ENCODE measurements at regions of chr7 and their contacts with region 1.

Region 1: GRCh38 chr7:8155836-8156235 is 106.1 kb downstream of the ICA1 start:
- DNase-seq: no peak
- ATAC-seq: no peak
- H3K4me3 ChIP-seq: no peak overlapping the region
- H3K27ac ChIP-seq: no peak overlapping the region
- H3K4me1 ChIP-seq: no peaks in the 10 kb centered on the region
- H3K27me3 ChIP-seq: no peaks in the 10 kb centered on the region
- CTCF ChIP-seq: no peak
- POLR2A ChIP-seq: no peak

Region 2: DNA sequence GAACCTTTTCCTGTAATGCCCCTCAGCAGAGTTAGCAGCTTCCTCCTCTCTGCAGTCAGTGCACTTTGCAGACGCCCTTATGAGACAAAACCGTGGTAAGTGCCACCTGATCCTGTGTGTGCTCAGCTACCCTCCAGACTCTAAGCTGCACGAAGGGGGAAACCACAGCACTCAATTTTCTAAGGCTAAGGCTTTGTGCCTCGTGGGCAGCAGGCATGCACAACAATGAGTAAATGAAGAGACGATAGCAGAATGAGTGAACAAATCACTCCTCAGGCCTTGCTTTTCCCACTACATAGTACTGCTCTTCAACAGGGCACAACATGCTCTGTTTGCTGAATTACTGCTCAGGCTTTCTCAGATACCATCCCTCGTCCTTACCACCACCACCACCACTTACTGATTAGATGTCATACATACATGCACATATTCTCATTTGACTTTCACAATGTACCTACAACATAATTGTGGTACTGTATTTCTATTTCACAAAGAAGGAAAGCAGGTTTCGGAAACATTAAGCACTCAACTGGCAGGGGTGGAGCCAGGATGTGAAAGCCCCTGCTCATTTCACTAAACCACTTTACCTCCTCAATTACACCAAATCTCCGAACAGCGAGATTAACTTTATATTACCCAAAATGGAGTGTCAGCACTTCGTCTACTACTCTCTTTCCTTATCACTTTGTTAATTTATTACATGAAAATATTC is 20.7 kb after region 1 on chr7:
- in situ Hi-C with region 1: no loop called
- intact Hi-C with region 1: loop called (anchors 2 kb)
- DNase-seq: no peak
- ATAC-seq: no peak
- H3K4me3 ChIP-seq: no peak overlapping the region
- H3K27ac ChIP-seq: no peak overlapping the region
- H3K4me1 ChIP-seq: peaks cover 15 to 28% of the 10 kb centered on the region in 2 donors
- H3K27me3 ChIP-seq: no peaks in the 10 kb centered on the region
- CTCF ChIP-seq: no peak
- POLR2A ChIP-seq: no peak

Region 3: DNA sequence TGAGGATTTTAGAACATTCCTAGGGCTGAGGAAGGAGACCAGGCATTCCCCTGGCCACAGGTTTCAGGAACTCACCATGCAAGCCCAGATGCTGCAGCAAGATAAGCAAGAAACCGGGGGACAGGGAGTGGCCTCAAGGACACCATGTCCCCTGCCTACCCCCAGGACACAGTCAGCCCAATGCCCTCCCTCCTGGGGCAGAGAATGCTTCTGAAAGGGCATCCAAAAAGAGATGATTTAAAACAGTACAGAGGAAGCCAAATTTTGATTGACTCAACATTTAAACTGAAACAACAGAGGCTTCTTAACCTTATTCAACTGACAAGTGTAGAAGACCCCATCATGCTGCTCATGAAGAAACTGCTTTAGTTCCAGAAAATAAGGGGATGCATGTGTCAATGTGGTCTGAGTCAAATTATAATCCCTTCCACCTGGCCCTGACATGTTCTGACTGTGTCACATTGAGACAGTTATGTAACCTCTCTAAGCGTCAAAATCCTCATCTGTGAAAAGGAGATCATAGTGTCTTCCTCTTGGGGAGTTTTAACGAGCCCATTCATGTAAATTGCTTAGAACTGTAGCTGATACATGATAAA is 46.1 kb after region 1 on chr7:
- in situ Hi-C with region 1: no loop called
- intact Hi-C with region 1: no loop called
- DNase-seq: no peak
- ATAC-seq: peak; percentile 33 to 44
- H3K4me3 ChIP-seq: no peak overlapping the region
- H3K27ac ChIP-seq: peak overlapping the region in 2 of 4 donors; percentile 35 to 44
- H3K4me1 ChIP-seq: peaks cover 0 to 5% of the 10 kb centered on the region in 2 donors
- H3K27me3 ChIP-seq: no peaks in the 10 kb centered on the region
- CTCF ChIP-seq: no peak
- POLR2A ChIP-seq: no peak

Region 4: GRCh38 chr7:8232999-8233847 is 77.4 kb after region 1 on chr7:
- in situ Hi-C with region 1: no loop called
- intact Hi-C with region 1: no loop called
- DNase-seq: no peak
- ATAC-seq: no peak
- H3K4me3 ChIP-seq: no peak overlapping the region
- H3K27ac ChIP-seq: no peak overlapping the region
- H3K4me1 ChIP-seq: no peaks in the 10 kb centered on the region
- H3K27me3 ChIP-seq: no peaks in the 10 kb centered on the region
- CTCF ChIP-seq: no peak
- POLR2A ChIP-seq: no peak

Measured in gastrocnemius medialis (tissue), 4 donors.